ENCODE measurements at regions of chr4 and their contacts with region 1.

Region 1: GRCh38 chr4:26459756-26460530 is 30.3 kb downstream of the CCKAR start:
- DNase-seq: no peak
- H3K4me3 ChIP-seq: no peak overlapping the region
- H3K27ac ChIP-seq: no peak overlapping the region
- H3K4me1 ChIP-seq: peaks cover 0 to 28% (median 8%) of the 10 kb centered on the region in 4 donors
- H3K27me3 ChIP-seq: no peaks in the 10 kb centered on the region
- CTCF ChIP-seq: no peak
- EP300 ChIP-seq: no peak
- POLR2A ChIP-seq: no peak

Region 2: GRCh38 chr4:25890571-25891485 is 569.1 kb before region 1 on chr4:
- intact Hi-C with region 1: no loop called
- DNase-seq: no peak
- H3K4me3 ChIP-seq: no peak overlapping the region
- H3K27ac ChIP-seq: no peak overlapping the region
- H3K4me1 ChIP-seq: no peaks in the 10 kb centered on the region
- H3K27me3 ChIP-seq: no peaks in the 10 kb centered on the region
- CTCF ChIP-seq: no peak
- EP300 ChIP-seq: no peak
- POLR2A ChIP-seq: no peak

Region 3: GRCh38 chr4:26509681-26510333 is 49.9 kb after region 1 on chr4:
- intact Hi-C with region 1: no loop called
- DNase-seq: peak in 1 of 2 donors; percentile 23
- H3K4me3 ChIP-seq: no peak overlapping the region
- H3K27ac ChIP-seq: no peak overlapping the region
- H3K4me1 ChIP-seq: peaks cover 0 to 9% (median 2%) of the 10 kb centered on the region in 4 donors
- H3K27me3 ChIP-seq: no peaks in the 10 kb centered on the region
- CTCF ChIP-seq: no peak
- EP300 ChIP-seq: no peak
- POLR2A ChIP-seq: no peak

Region 4: DNA sequence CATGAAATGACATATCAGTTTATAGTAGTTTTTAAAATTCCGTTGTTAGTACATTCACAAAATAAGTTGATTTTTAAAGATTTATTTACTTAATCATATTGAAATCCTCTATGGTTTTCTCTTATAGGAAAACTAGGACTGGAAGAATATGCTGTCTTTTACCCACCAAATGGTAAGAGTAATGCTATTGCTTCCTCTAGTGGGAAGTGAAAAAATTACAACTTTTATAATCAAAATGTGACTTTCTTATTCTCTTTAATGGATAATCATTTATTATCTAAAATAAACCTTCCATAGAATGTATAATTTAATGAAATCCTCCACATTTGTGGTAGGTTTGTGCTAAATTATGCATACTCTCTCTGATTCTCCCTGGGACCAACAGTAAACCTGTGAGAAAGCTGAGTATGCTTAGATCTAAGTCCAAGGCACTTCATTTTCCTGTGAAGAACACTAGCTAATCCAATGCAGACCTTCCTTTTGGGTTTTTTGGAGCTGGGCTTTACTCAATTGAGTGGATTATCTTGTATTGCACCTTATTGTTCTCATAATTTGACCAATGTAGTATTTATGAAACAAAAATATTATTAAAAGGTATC is 260.1 kb after region 1 on chr4:
- intact Hi-C with region 1: loop called (anchors 10 kb)
- DNase-seq: peak in 1 of 2 donors; percentile 44
- H3K4me3 ChIP-seq: no peak overlapping the region
- H3K27ac ChIP-seq: no peak overlapping the region
- H3K4me1 ChIP-seq: no peaks in the 10 kb centered on the region
- H3K27me3 ChIP-seq: no peaks in the 10 kb centered on the region
- CTCF ChIP-seq: peak in 5 of 7 experiments; percentile 17 to 67 (median 47)
- EP300 ChIP-seq: no peak
- POLR2A ChIP-seq: no peak

Measured in stomach (tissue), 19 donors.